GM12878 (cell line): ENCODE measurements at regions of chr12 and their contacts with region 1.

Region 1: GRCh38 chr12:24997970-24998582 is 49.2 kb upstream of the BCAT1 start:
- DNase-seq: peak; percentile 92
- ATAC-seq: peak; percentile 72
- H3K4me3 ChIP-seq: peak overlapping the region; percentile 65
- H3K27ac ChIP-seq: peak overlapping the region; percentile 84
- H3K4me1 ChIP-seq: peaks cover 62% of the 10 kb centered on the region
- H3K27me3 ChIP-seq: no peaks in the 10 kb centered on the region
- CTCF ChIP-seq: no peak
- EP300 ChIP-seq: peak; percentile 84 to 99
- POLR2A ChIP-seq: no peak
- RAD21 ChIP-seq: no peak

Region 2: GRCh38 chr12:24889411-24889810 is 108.7 kb before region 1 on chr12:
- CTCF ChIA-PET with region 1: no interaction called
- POLR2A ChIA-PET with region 1: no interaction called
- RAD21 ChIA-PET with region 1: no interaction called
- SMC1A ChIA-PET with region 1: no interaction called
- in situ Hi-C with region 1: no loop called
- intact Hi-C with region 1: no loop called
- DNase-seq: no peak
- ATAC-seq: no peak
- H3K4me3 ChIP-seq: no peak overlapping the region
- H3K27ac ChIP-seq: no peak overlapping the region
- H3K4me1 ChIP-seq: no peaks in the 10 kb centered on the region
- H3K27me3 ChIP-seq: no peaks in the 10 kb centered on the region
- CTCF ChIP-seq: no peak
- EP300 ChIP-seq: no peak
- POLR2A ChIP-seq: no peak
- RAD21 ChIP-seq: no peak

Region 3: DNA sequence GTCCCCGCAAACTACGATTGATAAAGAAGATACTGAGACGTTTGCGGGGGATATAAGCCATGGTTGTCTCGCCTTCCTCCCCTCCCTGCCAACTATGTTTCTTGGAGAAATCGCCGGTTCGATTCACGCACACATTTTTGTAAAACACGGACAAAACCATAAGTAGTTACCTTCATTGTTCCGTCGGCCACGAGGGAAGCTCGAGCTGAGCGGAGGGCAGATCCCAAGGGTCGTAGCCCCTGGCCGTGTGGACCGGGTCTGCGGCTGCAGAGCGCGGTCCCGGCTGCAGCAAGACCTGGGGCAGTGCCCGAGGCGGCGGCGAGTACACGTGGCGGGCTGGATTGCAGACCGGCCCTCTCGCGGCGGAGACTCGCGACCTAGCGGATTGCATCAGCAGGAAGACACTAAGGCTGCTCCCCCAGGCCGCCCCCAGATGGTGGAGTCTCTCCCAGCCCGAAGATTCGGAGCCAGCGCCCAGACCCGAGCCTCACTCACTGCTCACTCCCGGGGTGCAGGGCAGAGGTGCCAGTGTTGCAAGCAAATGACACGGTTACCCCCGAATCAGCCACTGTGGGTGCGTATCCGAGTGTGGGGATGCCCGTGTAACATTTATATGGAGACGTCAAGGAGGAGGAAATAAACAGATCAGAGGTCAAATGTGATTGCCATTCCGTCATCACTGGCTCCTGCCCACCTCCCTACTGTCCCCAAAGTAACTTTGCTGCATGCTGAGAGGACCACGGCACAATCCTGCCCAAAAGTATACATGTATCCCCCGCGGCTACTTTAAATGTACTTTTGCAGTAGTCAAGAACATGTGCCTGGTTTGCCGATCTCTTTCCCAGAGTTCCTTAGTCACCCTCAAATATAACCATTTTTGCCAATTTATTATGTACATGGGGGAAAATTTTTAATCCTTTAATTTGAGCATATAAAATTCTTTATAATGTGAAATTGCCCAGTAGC is 49.0 kb before region 1 on chr12 and contains the start of gene BCAT1:
- CTCF ChIA-PET with region 1: interaction called, 10 read pairs
- POLR2A ChIA-PET with region 1: interaction called, 13 read pairs
- RAD21 ChIA-PET with region 1: interaction called, 60 read pairs
- SMC1A ChIA-PET with region 1: interaction called, 69 read pairs
- in situ Hi-C with region 1: no loop called
- intact Hi-C with region 1: loop called (anchors 2 kb)
- DNase-seq: no peak
- ATAC-seq: peak; percentile 41
- H3K4me3 ChIP-seq: peak within 1 kb of the TSS; percentile 85
- H3K27ac ChIP-seq: peak within 1 kb of the TSS; percentile 97
- H3K4me1 ChIP-seq: peaks cover 52% of the 10 kb centered on the region
- H3K27me3 ChIP-seq: no peaks in the 10 kb centered on the region
- CTCF ChIP-seq: peak in 2 of 3 experiments; percentile 7 to 11; a peak in 1 of 6 replicates
- EP300 ChIP-seq: no peak
- POLR2A ChIP-seq: peak; percentile 88
- RAD21 ChIP-seq: no peak
- polyA plus RNA-seq, gene BCAT1: 26.2 to 38.1 TPM

Region 4: GRCh38 chr12:25020621-25021243 is 22.7 kb after region 1 on chr12:
- CTCF ChIA-PET with region 1: interaction called, 40 read pairs
- POLR2A ChIA-PET with region 1: interaction called, 50 read pairs
- RAD21 ChIA-PET with region 1: interaction called, 137 read pairs
- SMC1A ChIA-PET with region 1: interaction called, 172 read pairs
- in situ Hi-C with region 1: no loop called
- intact Hi-C with region 1: no loop called
- DNase-seq: peak; percentile 79
- ATAC-seq: peak; percentile 94
- H3K4me3 ChIP-seq: peak overlapping the region; percentile 49; the same call in 1 of the 2 replicates
- H3K27ac ChIP-seq: peak overlapping the region; percentile 76
- H3K4me1 ChIP-seq: peaks cover 35% of the 10 kb centered on the region
- H3K27me3 ChIP-seq: no peaks in the 10 kb centered on the region
- CTCF ChIP-seq: no peak
- EP300 ChIP-seq: peak; percentile 93 to 98
- POLR2A ChIP-seq: no peak
- RAD21 ChIP-seq: no peak; the same call in 1 of the 2 replicates

Region 5: GRCh38 chr12:25052196-25052913 is 54.3 kb after region 1 on chr12:
- CTCF ChIA-PET with region 1: interaction called, 141 read pairs
- POLR2A ChIA-PET with region 1: interaction called, 297 read pairs
- RAD21 ChIA-PET with region 1: interaction called, 462 read pairs
- SMC1A ChIA-PET with region 1: interaction called, 526 read pairs
- in situ Hi-C with region 1: loop called (anchors 5 kb)
- intact Hi-C with region 1: loop called (anchors 1 kb)
- DNase-seq: peak; percentile 93
- ATAC-seq: peak; percentile 79
- H3K4me3 ChIP-seq: peak overlapping the region; percentile 83
- H3K27ac ChIP-seq: peak overlapping the region; percentile 92
- H3K4me1 ChIP-seq: peaks cover 14% of the 10 kb centered on the region; the same call in 1 of the 2 replicates
- H3K27me3 ChIP-seq: no peaks in the 10 kb centered on the region
- CTCF ChIP-seq: no peak
- EP300 ChIP-seq: peak in 1 of 2 experiments; percentile 72; a peak in 2 of 4 replicates
- POLR2A ChIP-seq: peak; percentile 72
- RAD21 ChIP-seq: no peak

Region 6: GRCh38 chr12:25107920-25108319 is 109.8 kb after region 1 on chr12:
- CTCF ChIA-PET with region 1: interaction called, 27 read pairs
- POLR2A ChIA-PET with region 1: interaction called, 5 read pairs
- RAD21 ChIA-PET with region 1: interaction called, 19 read pairs
- SMC1A ChIA-PET with region 1: interaction called, 25 read pairs
- in situ Hi-C with region 1: no loop called
- intact Hi-C with region 1: no loop called
- DNase-seq: peak; percentile 64
- ATAC-seq: peak; percentile 86
- H3K4me3 ChIP-seq: no peak overlapping the region
- H3K27ac ChIP-seq: peak overlapping the region; percentile 60
- H3K4me1 ChIP-seq: peaks cover 16% of the 10 kb centered on the region
- H3K27me3 ChIP-seq: no peaks in the 10 kb centered on the region
- CTCF ChIP-seq: no peak
- EP300 ChIP-seq: peak; percentile 33 to 95; a peak in 3 of 4 replicates
- POLR2A ChIP-seq: no peak
- RAD21 ChIP-seq: no peak

Region 7: DNA sequence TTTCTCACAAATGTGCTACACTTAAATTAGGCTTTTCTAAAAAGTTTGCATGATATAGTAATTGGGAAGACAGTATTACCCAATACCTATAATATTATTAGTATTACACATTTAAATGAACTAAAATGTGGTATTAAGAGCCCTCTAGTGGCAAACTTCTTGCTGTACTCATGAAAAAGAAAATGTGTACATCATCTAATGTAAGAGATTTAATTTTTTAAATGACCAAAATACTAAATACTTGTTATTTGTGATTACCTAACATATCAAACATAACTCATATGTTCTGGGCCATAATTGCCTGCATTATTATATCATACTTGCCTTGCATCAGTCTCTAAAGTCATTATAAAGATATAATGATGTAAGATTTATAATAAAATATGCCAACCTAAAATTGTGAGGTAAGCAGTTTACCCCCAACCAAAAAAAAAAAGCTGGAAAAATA is 132.7 kb after region 1 on chr12:
- CTCF ChIA-PET with region 1: interaction called, 161 read pairs
- POLR2A ChIA-PET with region 1: no interaction called
- RAD21 ChIA-PET with region 1: interaction called, 103 read pairs
- SMC1A ChIA-PET with region 1: interaction called, 125 read pairs
- in situ Hi-C with region 1: no loop called
- intact Hi-C with region 1: no loop called
- DNase-seq: no peak
- ATAC-seq: peak; percentile 78
- H3K4me3 ChIP-seq: no peak overlapping the region
- H3K27ac ChIP-seq: no peak overlapping the region
- H3K4me1 ChIP-seq: peaks cover 2% of the 10 kb centered on the region; the same call in 1 of the 2 replicates
- H3K27me3 ChIP-seq: no peaks in the 10 kb centered on the region
- CTCF ChIP-seq: peak in 2 of 3 experiments; percentile 32 to 43; a peak in 3 of 6 replicates
- EP300 ChIP-seq: no peak
- POLR2A ChIP-seq: no peak
- RAD21 ChIP-seq: peak; percentile 65

Region 8: GRCh38 chr12:25648460-25648859 is 650.4 kb after region 1 on chr12:
- CTCF ChIA-PET with region 1: no interaction called
- POLR2A ChIA-PET with region 1: no interaction called
- RAD21 ChIA-PET with region 1: no interaction called
- SMC1A ChIA-PET with region 1: no interaction called
- in situ Hi-C with region 1: no loop called
- intact Hi-C with region 1: no loop called
- DNase-seq: no peak
- ATAC-seq: no peak
- H3K4me3 ChIP-seq: no peak overlapping the region
- H3K27ac ChIP-seq: no peak overlapping the region
- H3K4me1 ChIP-seq: no peaks in the 10 kb centered on the region
- H3K27me3 ChIP-seq: peaks cover 0 to 3% of the 10 kb centered on the region in 2 experiments; a peak in 1 of 4 replicates
- CTCF ChIP-seq: no peak
- EP300 ChIP-seq: no peak
- POLR2A ChIP-seq: no peak
- RAD21 ChIP-seq: no peak